Activated naive CD4-positive, alpha-beta T cell treated with anti-CD3 and anti-CD28 coated beads for 36 hours (primary cell): ENCODE measurements at regions of chr21 and their contacts with region 1.

Region 1: GRCh38 chr21:42337830-42338728 is 12.7 kb downstream of the TFF2 start:
- DNase-seq: peak; percentile 94
- H3K4me3 Mint-ChIP-seq: no peak overlapping the region
- H3K27ac Mint-ChIP-seq: no peak overlapping the region
- H3K4me1 Mint-ChIP-seq: peaks cover 8% of the 10 kb centered on the region
- H3K27me3 Mint-ChIP-seq: no peaks in the 10 kb centered on the region

Region 2: DNA sequence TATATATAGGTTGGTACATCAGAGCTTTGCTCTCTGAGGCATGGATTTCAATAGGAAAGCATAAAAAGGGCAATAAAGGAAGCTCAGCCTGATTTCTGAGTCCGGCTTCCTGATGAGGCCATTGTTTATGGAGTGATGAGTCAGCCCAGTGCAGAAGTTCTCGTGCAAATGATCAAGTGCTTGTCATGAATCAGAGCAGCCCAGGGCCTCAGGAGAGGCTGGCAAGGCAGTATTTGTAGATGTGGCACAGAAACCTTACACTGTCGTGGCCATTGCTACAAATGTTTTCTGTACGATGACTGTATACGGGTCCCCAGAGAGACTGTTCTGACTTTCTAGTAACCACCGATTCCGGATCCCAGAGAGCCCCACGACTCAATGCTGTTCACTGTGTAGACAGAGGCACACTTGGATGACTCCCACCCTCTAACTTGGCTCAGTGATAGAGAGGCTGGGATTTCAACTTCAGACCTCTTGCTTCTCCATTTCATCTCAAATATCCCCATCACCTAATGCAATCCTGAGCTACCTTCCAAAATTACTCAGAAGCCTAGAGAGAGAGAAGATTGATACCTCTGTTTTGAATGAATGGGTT is 240.1 kb before region 1 on chr21:
- CTCF ChIA-PET with region 1: no interaction called
- intact Hi-C with region 1: no loop called
- DNase-seq: no peak
- H3K4me3 Mint-ChIP-seq: no peak overlapping the region
- H3K27ac Mint-ChIP-seq: no peak overlapping the region
- H3K4me1 Mint-ChIP-seq: peaks cover 3% of the 10 kb centered on the region
- H3K27me3 Mint-ChIP-seq: no peaks in the 10 kb centered on the region

Region 3: DNA sequence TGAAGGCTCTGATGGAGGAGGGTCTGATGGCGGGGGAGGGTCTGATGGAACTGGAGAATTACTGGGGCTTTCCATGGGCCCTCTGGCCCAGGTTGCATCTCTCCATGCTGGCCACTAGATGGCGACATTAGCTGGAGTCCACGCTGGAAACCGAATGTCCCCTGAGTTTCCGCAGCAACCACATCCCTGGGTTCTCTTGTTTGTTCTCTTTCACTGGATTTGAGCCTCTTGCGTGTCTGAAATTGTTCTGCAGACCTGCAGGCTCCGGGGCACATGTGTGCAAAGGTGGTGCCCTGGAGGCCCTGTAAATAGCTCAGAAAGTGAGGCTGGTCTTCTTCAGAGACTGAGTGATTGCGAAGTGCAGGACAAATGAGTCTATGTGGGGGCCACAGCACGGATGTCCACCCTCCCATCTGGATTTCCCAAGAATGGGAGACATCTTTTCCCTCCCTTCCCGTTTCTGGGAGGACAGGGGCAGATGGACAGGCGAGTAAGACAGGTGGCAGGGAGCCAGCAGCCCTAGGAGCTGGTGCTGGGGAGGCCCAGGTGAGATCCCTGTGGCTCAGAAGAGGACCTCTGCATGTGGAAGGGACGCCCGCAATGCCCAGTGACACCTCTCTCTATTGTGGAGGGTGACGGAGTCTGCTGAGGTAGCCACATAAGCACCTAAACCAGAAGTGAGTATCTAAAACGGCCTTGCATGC is 192.4 kb before region 1 on chr21:
- CTCF ChIA-PET with region 1: interaction called, 5 read pairs
- intact Hi-C with region 1: loop called (anchors 10 kb)
- DNase-seq: peak; percentile 77
- H3K4me3 Mint-ChIP-seq: no peak overlapping the region
- H3K27ac Mint-ChIP-seq: no peak overlapping the region
- H3K4me1 Mint-ChIP-seq: peaks cover 7% of the 10 kb centered on the region
- H3K27me3 Mint-ChIP-seq: no peaks in the 10 kb centered on the region

Region 4: DNA sequence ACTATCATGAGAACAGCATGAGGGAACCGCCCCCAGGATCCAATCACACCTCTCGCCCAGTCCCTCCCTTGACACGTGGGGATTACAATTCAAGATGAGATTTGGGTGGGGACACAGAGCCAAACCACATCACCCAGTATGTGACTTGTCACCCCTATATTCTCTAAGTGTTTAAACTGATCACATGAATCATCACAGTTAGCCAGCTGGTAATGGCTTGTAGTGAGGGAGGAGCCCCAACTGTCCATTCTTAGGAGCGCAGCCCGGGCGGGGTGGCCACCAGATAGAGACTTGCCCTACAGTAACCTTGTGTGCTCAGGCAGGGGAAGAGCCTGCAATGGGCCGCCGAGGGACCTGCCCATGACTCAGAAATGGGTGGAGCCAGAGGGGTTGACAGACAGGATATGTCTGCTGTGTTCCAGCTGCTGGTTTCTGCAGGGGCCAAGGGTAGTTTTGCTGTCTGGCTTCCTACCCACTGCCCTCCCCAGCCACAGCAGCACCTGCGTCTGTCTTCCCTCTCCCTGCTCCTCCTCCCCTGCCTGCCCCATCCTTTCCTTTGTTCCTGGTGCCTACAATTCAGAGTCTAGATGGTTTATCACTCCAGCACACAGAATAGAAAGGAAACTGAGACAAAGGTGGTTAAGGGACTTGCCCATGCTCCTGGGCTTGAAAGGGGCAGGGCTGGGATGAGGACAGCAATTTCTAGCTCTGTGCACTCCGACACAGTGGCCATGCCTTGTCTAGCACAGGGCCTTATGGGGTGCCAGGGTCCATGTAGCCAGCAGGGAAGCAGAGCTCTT is 110.0 kb before region 1 on chr21:
- CTCF ChIA-PET with region 1: no interaction called
- intact Hi-C with region 1: no loop called
- DNase-seq: peak; percentile 98
- H3K4me3 Mint-ChIP-seq: peak overlapping the region; percentile 54
- H3K27ac Mint-ChIP-seq: peak overlapping the region; percentile 89
- H3K4me1 Mint-ChIP-seq: peaks cover 78% of the 10 kb centered on the region
- H3K27me3 Mint-ChIP-seq: no peaks in the 10 kb centered on the region

Region 5: DNA sequence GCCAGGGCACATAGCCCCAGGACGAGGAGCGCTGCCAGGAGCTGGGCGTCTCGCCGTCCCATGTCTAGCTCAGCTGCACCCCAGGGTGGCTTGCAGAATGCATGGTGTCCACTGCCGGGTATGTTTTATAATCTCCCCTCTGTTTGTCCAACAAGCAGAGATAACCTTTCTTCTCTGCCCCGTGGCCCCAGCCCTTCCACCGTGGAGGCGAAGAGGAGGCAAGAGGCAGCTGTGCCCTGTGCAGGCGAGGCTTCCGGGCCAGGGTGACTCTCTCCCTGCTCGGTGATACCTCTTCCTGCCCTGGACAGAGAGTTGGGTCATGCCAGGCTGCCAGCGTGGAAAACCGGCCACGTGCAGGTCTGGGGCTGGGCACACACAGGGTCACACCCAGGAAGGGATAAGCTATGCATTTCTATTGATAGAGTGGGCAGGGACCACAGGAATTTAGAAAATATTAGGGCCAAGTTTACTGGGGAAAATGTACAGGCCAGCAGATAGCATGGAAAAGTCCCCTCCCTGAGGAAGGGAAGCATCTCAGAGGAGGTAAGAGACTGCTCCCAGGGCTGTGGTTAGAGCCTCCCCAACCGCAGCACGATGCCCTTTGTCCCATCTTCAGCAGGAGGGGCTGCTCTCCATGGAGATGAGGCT is 12.9 kb after region 1 on chr21 and contains the start of gene TFF2:
- CTCF ChIA-PET with region 1: interaction called, 12 read pairs
- intact Hi-C with region 1: no loop called
- DNase-seq: no peak
- H3K4me3 Mint-ChIP-seq: no peak within 1 kb of the TSS
- H3K27ac Mint-ChIP-seq: no peak within 1 kb of the TSS
- H3K4me1 Mint-ChIP-seq: no peaks in the 10 kb centered on the region
- H3K27me3 Mint-ChIP-seq: no peaks in the 10 kb centered on the region
- total RNA-seq, gene TFF2: not detected

Region 6: GRCh38 chr21:42424914-42425541 is 86.9 kb after region 1 on chr21:
- CTCF ChIA-PET with region 1: interaction called, 6 read pairs
- intact Hi-C with region 1: loop called (anchors 2 kb)
- DNase-seq: peak; percentile 75
- H3K4me3 Mint-ChIP-seq: peak overlapping the region; percentile 44
- H3K27ac Mint-ChIP-seq: peak overlapping the region; percentile 61
- H3K4me1 Mint-ChIP-seq: peaks cover 67% of the 10 kb centered on the region
- H3K27me3 Mint-ChIP-seq: no peaks in the 10 kb centered on the region

Region 7: GRCh38 chr21:42456457-42456856 is 118.4 kb after region 1 on chr21:
- CTCF ChIA-PET with region 1: interaction called, 14 read pairs
- intact Hi-C with region 1: no loop called
- DNase-seq: peak; percentile 83
- H3K4me3 Mint-ChIP-seq: no peak overlapping the region
- H3K27ac Mint-ChIP-seq: peak overlapping the region; percentile 57
- H3K4me1 Mint-ChIP-seq: peaks cover 42% of the 10 kb centered on the region
- H3K27me3 Mint-ChIP-seq: no peaks in the 10 kb centered on the region

Region 8: DNA sequence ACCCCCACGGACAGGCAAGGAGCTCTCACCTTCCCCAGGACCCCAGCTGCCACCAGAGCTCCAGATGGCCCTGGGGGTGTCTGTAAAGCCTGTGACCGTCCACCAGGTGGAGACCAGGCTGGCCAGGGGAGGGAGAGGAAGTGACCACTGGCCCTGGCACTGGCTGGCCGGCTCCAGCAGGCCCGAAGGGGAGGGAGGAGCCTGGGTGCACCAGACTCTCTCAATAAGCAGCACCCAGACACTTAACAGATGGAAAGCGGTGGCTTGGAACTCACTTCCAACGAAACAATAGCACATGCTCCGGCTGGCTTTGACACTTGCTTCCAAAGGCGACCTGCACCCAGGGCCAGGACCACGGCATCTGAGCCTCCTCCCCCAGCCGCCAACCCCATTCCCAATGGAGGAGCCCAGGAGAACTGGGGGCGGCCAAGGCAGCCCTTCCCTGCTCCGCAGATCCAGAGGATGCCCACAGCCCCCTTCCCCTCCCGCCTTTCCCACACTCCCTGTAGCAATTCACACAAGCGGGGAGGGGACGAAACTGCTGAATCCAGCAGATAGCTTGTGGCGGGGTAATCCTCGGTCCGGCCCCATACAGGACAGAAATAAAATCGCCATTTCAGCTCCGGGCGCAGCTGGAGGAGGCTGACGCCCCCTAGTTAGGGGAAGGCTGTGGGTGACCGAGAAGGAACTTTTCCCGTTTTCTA is 314.6 kb after region 1 on chr21:
- CTCF ChIA-PET with region 1: no interaction called
- intact Hi-C with region 1: no loop called
- DNase-seq: no peak
- H3K4me3 Mint-ChIP-seq: peak overlapping the region; percentile 70
- H3K27ac Mint-ChIP-seq: no peak overlapping the region
- H3K4me1 Mint-ChIP-seq: peaks cover 20% of the 10 kb centered on the region
- H3K27me3 Mint-ChIP-seq: no peaks in the 10 kb centered on the region